Activated B cell treated with CpG ODN at 0.5 μM for 24 hours (primary cell): ENCODE measurements at regions of chr12 and their contacts with region 1.

Region 1: DNA sequence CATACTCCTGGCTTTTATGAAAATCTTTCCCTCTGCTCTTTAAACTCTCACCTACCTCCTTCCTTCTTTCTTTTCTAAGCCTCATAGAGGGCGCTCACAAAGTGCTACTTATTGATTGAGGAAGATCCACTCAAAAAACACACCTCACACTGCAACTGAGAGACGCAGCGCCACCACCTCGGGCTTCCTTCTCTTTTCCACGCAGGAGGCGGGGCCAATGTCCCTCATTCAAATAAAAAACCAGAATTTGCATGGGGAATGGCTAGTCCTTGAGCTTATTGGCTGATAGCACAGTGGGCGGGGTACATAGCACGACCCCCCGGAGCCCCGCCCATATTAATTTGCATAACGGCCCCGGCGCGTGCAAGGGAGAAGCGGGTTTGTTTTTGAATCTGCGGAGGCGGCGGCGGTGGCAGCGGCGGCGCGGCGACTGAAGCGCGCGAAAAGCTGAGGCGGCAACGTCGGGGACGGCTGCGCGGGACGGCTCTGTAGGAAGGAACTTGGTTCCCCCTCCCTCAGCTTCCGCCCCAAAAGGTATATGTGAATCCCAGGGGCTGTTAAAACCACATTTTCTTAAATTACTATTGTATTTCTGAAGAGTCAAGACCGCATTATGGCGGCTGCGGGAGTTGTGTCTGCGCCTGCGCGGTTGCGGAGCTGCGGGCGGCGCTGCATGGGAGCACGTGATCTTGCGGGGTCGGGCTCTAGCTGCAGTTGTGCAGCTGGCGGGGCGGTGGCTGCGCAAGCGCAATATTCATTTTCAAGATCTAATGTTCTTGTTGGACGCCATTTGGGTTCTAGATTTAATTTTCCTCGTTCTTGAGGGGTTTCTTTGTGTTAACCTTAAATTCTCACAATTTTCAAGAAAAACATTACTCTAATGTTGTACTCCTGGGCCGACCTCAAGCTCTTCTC is at the start of gene ATF7IP:
- DNase-seq: peak; percentile 89
- ATAC-seq: peak; percentile 83
- H3K4me3 Mint-ChIP-seq: peak within 1 kb of the TSS; percentile 87
- H3K27ac Mint-ChIP-seq: peak within 1 kb of the TSS; percentile 97
- H3K4me1 Mint-ChIP-seq: peaks cover 64% of the 10 kb centered on the region
- H3K27me3 Mint-ChIP-seq: no peaks in the 10 kb centered on the region
- CTCF ChIP-seq: no peak
- total RNA-seq, gene ATF7IP: 142 and 153 TPM in 2 replicates

Region 2: GRCh38 chr12:13100882-13101769 is 1264.4 kb before region 1 on chr12:
- CTCF ChIA-PET with region 1: no interaction called
- POLR2A ChIA-PET with region 1: no interaction called
- intact Hi-C with region 1: loop called (anchors 2 kb)
- DNase-seq: peak; percentile 94
- ATAC-seq: peak; percentile 79
- H3K4me3 Mint-ChIP-seq: peak overlapping the region; percentile 83
- H3K27ac Mint-ChIP-seq: peak overlapping the region; percentile 96
- H3K4me1 Mint-ChIP-seq: peaks cover 63% of the 10 kb centered on the region
- H3K27me3 Mint-ChIP-seq: no peaks in the 10 kb centered on the region
- CTCF ChIP-seq: no peak

Region 3: DNA sequence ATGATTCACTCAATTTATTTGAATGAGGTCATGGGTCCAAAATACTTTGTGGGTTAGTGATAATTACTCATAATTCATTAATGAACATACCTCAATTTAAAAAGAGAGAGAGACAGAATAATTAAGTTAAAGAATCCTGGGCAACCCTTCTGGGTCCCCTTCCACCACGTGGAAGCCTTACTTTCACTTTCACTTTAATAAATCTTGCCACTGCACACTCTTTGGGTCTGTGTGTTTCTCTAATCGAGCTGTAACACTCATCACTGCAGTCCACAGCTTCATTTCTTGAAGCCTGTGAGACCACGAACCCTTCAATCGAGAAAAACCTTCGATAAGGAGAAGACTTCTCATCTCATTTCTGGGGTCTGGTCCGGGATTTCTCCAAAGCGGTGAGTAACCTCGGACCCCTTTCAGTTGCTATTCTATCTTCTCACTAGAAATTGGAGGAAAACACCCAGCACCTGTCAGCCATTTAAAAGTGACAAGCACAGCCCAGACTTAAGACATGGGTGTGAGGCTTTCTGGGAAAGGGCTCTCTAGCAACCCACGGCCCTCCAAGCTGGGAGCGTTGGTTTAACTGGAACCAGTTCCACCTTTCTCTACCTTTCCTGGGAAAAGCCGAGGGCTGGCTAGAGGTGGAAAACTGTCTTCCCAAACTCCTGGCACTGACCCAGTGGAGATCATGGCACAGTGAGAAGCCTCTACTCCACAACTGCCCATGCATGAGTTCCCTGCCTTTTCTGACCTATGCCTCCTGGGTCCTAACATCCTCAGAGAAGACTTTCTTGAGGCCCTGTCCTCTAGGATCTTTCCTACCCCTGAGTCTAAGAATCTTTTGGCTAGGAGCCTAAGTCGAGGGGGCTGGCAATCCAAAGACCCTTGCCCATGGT is 148.9 kb before region 1 on chr12:
- CTCF ChIA-PET with region 1: interaction called, 5 read pairs
- POLR2A ChIA-PET with region 1: interaction called, 19 read pairs
- intact Hi-C with region 1: no loop called
- DNase-seq: no peak
- ATAC-seq: peak; percentile 62
- H3K4me3 Mint-ChIP-seq: peak overlapping the region; percentile 70
- H3K27ac Mint-ChIP-seq: peak overlapping the region; percentile 82
- H3K4me1 Mint-ChIP-seq: peaks cover 34% of the 10 kb centered on the region
- H3K27me3 Mint-ChIP-seq: no peaks in the 10 kb centered on the region
- CTCF ChIP-seq: no peak

Region 4: GRCh38 chr12:14278294-14278953 is 87.1 kb before region 1 on chr12:
- CTCF ChIA-PET with region 1: interaction called, 5 read pairs
- POLR2A ChIA-PET with region 1: interaction called, 50 read pairs
- intact Hi-C with region 1: loop called (anchors 1 kb)
- DNase-seq: no peak
- ATAC-seq: peak; percentile 32
- H3K4me3 Mint-ChIP-seq: peak overlapping the region; percentile 24
- H3K27ac Mint-ChIP-seq: peak overlapping the region; percentile 85
- H3K4me1 Mint-ChIP-seq: peaks cover 76% of the 10 kb centered on the region
- H3K27me3 Mint-ChIP-seq: no peaks in the 10 kb centered on the region
- CTCF ChIP-seq: no peak

Region 5: GRCh38 chr12:14384783-14385638 is 19.5 kb after region 1 on chr12:
- CTCF ChIA-PET with region 1: interaction called, 5 read pairs
- POLR2A ChIA-PET with region 1: interaction called, 23 read pairs
- intact Hi-C with region 1: loop called (anchors 2 kb)
- DNase-seq: no peak
- ATAC-seq: peak; percentile 89
- H3K4me3 Mint-ChIP-seq: peak overlapping the region; percentile 57
- H3K27ac Mint-ChIP-seq: peak overlapping the region; percentile 85
- H3K4me1 Mint-ChIP-seq: peaks cover 57% of the 10 kb centered on the region
- H3K27me3 Mint-ChIP-seq: no peaks in the 10 kb centered on the region
- CTCF ChIP-seq: no peak

Region 6: DNA sequence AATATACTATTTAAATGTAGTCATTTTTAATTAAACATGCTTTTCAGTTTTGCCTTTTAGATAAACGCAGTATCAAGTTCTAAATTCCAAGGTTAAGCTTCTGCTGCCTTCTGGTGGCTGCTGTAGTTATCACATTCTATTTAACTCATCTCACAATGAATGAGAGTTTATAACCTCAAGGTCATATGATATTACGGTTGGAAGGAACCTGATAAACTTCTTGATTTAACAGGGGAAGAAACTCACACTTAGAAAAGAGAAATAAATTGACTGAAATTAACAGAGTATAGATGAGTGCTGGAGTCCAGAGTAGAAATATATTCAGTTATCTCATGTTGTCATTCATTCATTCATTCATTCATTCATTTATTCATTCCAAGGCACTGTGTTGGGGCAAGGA is 299.0 kb after region 1 on chr12:
- CTCF ChIA-PET with region 1: no interaction called
- POLR2A ChIA-PET with region 1: interaction called, 3 read pairs
- intact Hi-C with region 1: loop called (anchors 5 kb)
- DNase-seq: no peak
- ATAC-seq: peak; percentile 85
- H3K4me3 Mint-ChIP-seq: no peak overlapping the region
- H3K27ac Mint-ChIP-seq: no peak overlapping the region
- H3K4me1 Mint-ChIP-seq: peaks cover 14% of the 10 kb centered on the region
- H3K27me3 Mint-ChIP-seq: no peaks in the 10 kb centered on the region
- CTCF ChIP-seq: no peak